Activated CD4-positive, alpha-beta T cell treated with anti-CD3 and anti-CD28 coated beads for 36 hours (primary cell): ENCODE measurements at regions of chr9 and their contacts with region 1.

Region 1: DNA sequence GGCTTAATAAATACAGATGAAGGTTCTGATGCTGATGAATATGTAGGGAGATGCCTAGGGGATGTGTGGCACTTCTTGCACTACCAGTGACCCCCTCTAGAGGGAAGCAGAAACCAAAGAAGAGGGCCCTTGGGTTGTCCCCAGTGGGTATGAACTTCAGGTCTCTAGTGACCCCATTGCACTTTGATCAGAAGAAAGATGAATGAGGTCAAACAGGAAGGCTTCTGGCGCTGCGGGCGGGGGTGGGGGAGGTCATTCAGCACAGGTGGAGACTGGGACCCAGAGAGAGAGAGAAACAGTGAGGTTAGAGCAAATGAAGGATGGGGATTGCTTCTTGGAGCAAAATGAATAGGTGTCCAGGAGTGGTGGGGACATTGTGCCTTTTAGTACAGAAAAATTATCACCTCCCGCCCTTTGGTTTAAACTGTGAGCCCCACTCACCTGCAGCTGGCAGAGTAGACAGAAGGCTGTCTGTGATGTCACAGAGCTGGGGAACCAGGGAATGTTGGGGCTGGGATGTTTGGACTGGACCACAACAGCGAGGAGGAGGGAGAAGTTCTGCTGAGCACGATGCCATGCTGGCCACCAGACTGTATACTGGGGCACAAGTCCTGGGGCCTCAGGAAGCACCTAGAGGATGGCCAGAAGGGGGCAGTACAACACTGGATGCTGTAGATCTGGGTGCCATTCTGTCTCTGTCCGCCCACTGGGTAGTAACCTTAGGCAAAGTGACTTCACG is at the start of gene TEX48:
- DNase-seq: peak; percentile 91
- ATAC-seq: peak; percentile 87
- H3K4me3 Mint-ChIP-seq: peak within 1 kb of the TSS; percentile 39
- H3K27ac Mint-ChIP-seq: peak within 1 kb of the TSS; percentile 86
- H3K4me1 Mint-ChIP-seq: peaks cover 56% of the 10 kb centered on the region
- H3K27me3 Mint-ChIP-seq: peaks cover 5% of the 10 kb centered on the region
- total RNA-seq, gene TEX48: 0.69 to 0.75 TPM

Region 2: DNA sequence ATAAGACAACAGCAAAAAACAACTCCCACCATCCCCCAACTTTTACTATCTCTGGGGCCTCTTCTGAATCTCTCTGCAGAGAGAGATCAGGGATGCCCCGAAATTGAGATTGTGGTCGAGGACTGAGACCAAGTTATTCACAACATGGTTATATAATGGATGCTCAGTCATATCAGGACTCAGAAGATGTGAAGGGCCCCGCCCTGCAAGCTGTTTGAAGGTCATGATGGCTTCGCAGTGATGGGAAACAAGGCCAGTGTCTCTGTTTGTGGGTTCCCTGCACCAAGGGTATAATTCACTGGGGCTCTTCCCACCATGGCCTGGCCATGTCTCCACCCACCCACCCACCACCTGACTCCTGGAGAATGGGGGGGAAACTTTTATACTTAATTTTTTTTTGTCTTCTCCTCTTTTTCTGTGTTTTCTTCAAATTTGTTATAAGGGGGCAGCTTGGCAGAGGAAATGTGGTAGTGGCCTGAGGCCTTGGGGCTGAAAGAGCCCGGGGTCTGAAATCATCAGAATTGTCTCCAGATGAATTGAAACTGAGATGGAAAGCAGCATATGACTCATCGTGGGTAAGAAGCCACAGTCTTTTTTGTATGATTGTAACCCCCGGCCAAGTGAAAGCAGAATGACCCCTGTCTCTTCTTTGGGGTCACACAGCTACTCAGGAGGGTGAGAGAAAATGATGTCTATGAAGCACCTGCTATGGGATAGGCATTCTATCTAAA is 15.2 kb after region 1 on chr9:
- CTCF ChIA-PET with region 1: interaction called, 21 read pairs
- POLR2A ChIA-PET with region 1: interaction called, 5 read pairs
- intact Hi-C with region 1: loop called in 1 of 2 experiments (anchors 1 kb)
- DNase-seq: peak; percentile 86
- ATAC-seq: peak; percentile 49
- H3K4me3 Mint-ChIP-seq: peak overlapping the region; percentile 28
- H3K27ac Mint-ChIP-seq: peak overlapping the region; percentile 89
- H3K4me1 Mint-ChIP-seq: peaks cover 89% of the 10 kb centered on the region
- H3K27me3 Mint-ChIP-seq: no peaks in the 10 kb centered on the region

Region 3: GRCh38 chr9:114805670-114806525 is 124.1 kb after region 1 on chr9 and contains the start of gene TNFSF15:
- CTCF ChIA-PET with region 1: interaction called, 5 read pairs
- POLR2A ChIA-PET with region 1: no interaction called
- intact Hi-C with region 1: loop called in 1 of 2 experiments (anchors 1 kb)
- DNase-seq: peak; percentile 64
- ATAC-seq: peak; percentile 85
- H3K4me3 Mint-ChIP-seq: peak within 1 kb of the TSS; percentile 43
- H3K27ac Mint-ChIP-seq: peak within 1 kb of the TSS; percentile 68
- H3K4me1 Mint-ChIP-seq: peaks cover 25% of the 10 kb centered on the region
- H3K27me3 Mint-ChIP-seq: peaks cover 3% of the 10 kb centered on the region
- total RNA-seq, gene TNFSF15: 0.47 to 0.50 TPM

Region 4: GRCh38 chr9:114919611-114920010 is 237.8 kb after region 1 on chr9:
- CTCF ChIA-PET with region 1: interaction called, 14 read pairs
- POLR2A ChIA-PET with region 1: interaction called, 4 read pairs
- intact Hi-C with region 1: no loop called
- DNase-seq: peak; percentile 55
- ATAC-seq: peak; percentile 86
- H3K4me3 Mint-ChIP-seq: peak overlapping the region; percentile 3
- H3K27ac Mint-ChIP-seq: peak overlapping the region; percentile 69
- H3K4me1 Mint-ChIP-seq: peaks cover 90% of the 10 kb centered on the region
- H3K27me3 Mint-ChIP-seq: no peaks in the 10 kb centered on the region

Region 5: DNA sequence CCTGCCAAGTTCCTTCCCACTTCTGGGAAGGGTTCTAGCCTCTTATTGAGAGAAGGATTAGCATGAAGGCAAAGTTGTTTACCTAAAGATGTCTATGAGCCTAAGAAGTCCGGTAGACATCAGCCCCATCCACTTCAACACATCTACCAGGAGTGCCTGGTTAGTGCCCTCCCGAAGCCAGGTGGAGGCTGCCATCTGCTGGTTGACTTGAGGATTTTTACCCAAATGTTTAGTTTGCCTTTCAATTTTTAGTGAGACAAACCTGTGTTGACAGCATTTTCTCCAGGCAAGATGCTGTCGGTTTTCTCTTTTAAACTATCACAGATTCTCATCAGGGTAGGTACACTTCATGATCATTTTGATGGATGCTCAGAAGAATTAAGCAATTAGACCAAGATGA is 332.2 kb after region 1 on chr9:
- CTCF ChIA-PET with region 1: interaction called, 75 read pairs
- POLR2A ChIA-PET with region 1: no interaction called
- intact Hi-C with region 1: loop called (anchors 1 kb)
- DNase-seq: peak; percentile 89
- ATAC-seq: peak; percentile 89
- H3K4me3 Mint-ChIP-seq: no peak overlapping the region
- H3K27ac Mint-ChIP-seq: peak overlapping the region; percentile 58
- H3K4me1 Mint-ChIP-seq: peaks cover 46% of the 10 kb centered on the region
- H3K27me3 Mint-ChIP-seq: no peaks in the 10 kb centered on the region